ENCODE measurements at regions of chr17 and their contacts with region 1.

Region 1: GRCh38 chr17:7435221-7435675 is at the start of gene TMEM102:
- DNase-seq: peak; percentile 96 to 100 (median 98)
- ATAC-seq: peak; percentile 82
- H3K4me3 ChIP-seq: peak within 1 kb of the TSS; percentile 86
- H3K4me3 Mint-ChIP-seq: peak within 1 kb of the TSS; percentile 87
- H3K27ac ChIP-seq: peak within 1 kb of the TSS; percentile 83 to 93
- H3K27ac Mint-ChIP-seq: peak within 1 kb of the TSS; percentile 87
- H3K4me1 ChIP-seq: peaks cover 51% of the 10 kb centered on the region
- H3K4me1 Mint-ChIP-seq: peaks cover 41% of the 10 kb centered on the region
- H3K27me3 ChIP-seq: peaks cover 16 to 21% of the 10 kb centered on the region in 2 experiments
- H3K27me3 Mint-ChIP-seq: peaks cover 16% of the 10 kb centered on the region
- CTCF ChIP-seq: no peak
- total RNA-seq, gene TMEM102: 6.8 to 7.1 TPM

Region 2: GRCh38 chr17:7204828-7205461 is 230.3 kb before region 1 on chr17:
- CTCF ChIA-PET with region 1: no interaction called
- POLR2A ChIA-PET with region 1: no interaction called
- intact Hi-C with region 1: loop called in 1 of 2 experiments (anchors 1 kb)
- DNase-seq: peak; percentile 84 to 99 (median 94)
- ATAC-seq: peak; percentile 81
- H3K4me3 ChIP-seq: peak overlapping the region; percentile 66
- H3K4me3 Mint-ChIP-seq: peak overlapping the region; percentile 83
- H3K27ac ChIP-seq: peak overlapping the region; percentile 86 to 95
- H3K27ac Mint-ChIP-seq: peak overlapping the region; percentile 87
- H3K4me1 ChIP-seq: peaks cover 31% of the 10 kb centered on the region
- H3K4me1 Mint-ChIP-seq: peaks cover 36% of the 10 kb centered on the region
- H3K27me3 ChIP-seq: no peaks in the 10 kb centered on the region
- H3K27me3 Mint-ChIP-seq: no peaks in the 10 kb centered on the region
- CTCF ChIP-seq: no peak

Region 3: GRCh38 chr17:7329374-7329996 is 105.8 kb before region 1 on chr17:
- CTCF ChIA-PET with region 1: interaction called, 3 read pairs
- POLR2A ChIA-PET with region 1: interaction called, 10 read pairs
- intact Hi-C with region 1: no loop called
- DNase-seq: peak; percentile 90 to 99 (median 94)
- ATAC-seq: peak; percentile 73
- H3K4me3 ChIP-seq: peak overlapping the region; percentile 64
- H3K4me3 Mint-ChIP-seq: peak overlapping the region; percentile 90
- H3K27ac ChIP-seq: peak overlapping the region; percentile 80 to 92
- H3K27ac Mint-ChIP-seq: peak overlapping the region; percentile 88
- H3K4me1 ChIP-seq: peaks cover 58% of the 10 kb centered on the region
- H3K4me1 Mint-ChIP-seq: peaks cover 47% of the 10 kb centered on the region
- H3K27me3 ChIP-seq: no peaks in the 10 kb centered on the region
- H3K27me3 Mint-ChIP-seq: no peaks in the 10 kb centered on the region
- CTCF ChIP-seq: no peak

Region 4: GRCh38 chr17:7394452-7395191 is 40.6 kb before region 1 on chr17 and contains the start of gene PLSCR3:
- CTCF ChIA-PET with region 1: interaction called, 4 read pairs
- POLR2A ChIA-PET with region 1: interaction called, 10 read pairs
- intact Hi-C with region 1: loop called (anchors 5 to 10 kb)
- DNase-seq: peak; percentile 56 to 90 (median 80)
- ATAC-seq: peak; percentile 87
- H3K4me3 ChIP-seq: peak within 1 kb of the TSS; percentile 82
- H3K4me3 Mint-ChIP-seq: peak within 1 kb of the TSS; percentile 96
- H3K27ac ChIP-seq: peak within 1 kb of the TSS; percentile 68 to 79
- H3K27ac Mint-ChIP-seq: peak within 1 kb of the TSS; percentile 94
- H3K4me1 ChIP-seq: peaks cover 48% of the 10 kb centered on the region
- H3K4me1 Mint-ChIP-seq: peaks cover 37% of the 10 kb centered on the region
- H3K27me3 ChIP-seq: no peaks in the 10 kb centered on the region
- H3K27me3 Mint-ChIP-seq: no peaks in the 10 kb centered on the region
- CTCF ChIP-seq: peak; percentile 20
- total RNA-seq, gene PLSCR3: 66.3 to 70.3 TPM

Region 5: DNA sequence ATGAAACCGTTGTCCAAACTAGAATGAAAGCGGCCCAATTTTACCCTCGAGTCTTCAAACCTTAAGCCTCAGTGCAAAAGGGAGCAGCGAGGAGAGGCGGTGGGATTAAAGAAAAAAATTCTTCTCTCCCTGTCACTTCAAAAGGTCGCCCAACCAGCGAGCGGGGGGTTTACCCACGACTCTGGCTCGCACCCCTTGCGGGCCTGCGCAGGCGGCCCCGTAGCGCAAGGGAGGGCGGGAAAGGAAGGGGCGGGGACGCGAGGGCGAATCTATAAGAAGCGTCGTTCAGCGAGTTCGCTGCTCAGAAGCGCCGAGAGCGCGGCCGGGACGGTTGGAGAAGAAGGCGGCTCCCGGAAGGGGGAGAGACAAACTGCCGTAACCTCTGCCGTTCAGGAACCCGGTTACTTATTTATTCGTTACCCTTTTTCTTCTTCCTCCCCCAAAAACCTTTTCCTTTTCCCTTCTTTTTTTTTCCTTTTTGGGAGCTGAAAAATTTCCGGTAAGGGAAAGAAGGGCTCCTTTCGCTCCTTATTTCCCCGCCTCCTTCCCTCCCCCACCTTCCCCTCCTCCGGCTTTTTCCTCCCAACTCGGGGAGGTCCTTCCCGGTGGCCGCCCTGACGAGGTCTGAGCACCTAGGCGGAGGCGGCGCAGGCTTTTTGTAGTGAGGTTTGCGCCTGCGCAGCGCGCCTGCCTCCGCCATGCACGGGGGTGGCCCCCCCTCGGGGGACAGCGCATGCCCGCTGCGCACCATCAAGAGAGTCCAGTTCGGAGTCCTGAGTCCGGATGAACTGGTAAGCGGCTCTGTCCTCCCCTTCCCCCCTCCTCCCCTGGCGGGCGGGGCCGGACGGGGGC is 49.0 kb after region 1 on chr17 and contains the start of gene POLR2A:
- CTCF ChIA-PET with region 1: interaction called, 61 read pairs
- POLR2A ChIA-PET with region 1: interaction called, 156 read pairs
- intact Hi-C with region 1: loop called (anchors 1 kb)
- DNase-seq: peak; percentile 96 to 100 (median 98)
- ATAC-seq: peak; percentile 66
- H3K4me3 ChIP-seq: peak within 1 kb of the TSS; percentile 87
- H3K4me3 Mint-ChIP-seq: peak within 1 kb of the TSS; percentile 94
- H3K27ac ChIP-seq: peak within 1 kb of the TSS; percentile 99
- H3K27ac Mint-ChIP-seq: peak within 1 kb of the TSS; percentile 99
- H3K4me1 ChIP-seq: peaks cover 73% of the 10 kb centered on the region
- H3K4me1 Mint-ChIP-seq: peaks cover 72% of the 10 kb centered on the region
- H3K27me3 ChIP-seq: no peaks in the 10 kb centered on the region
- H3K27me3 Mint-ChIP-seq: no peaks in the 10 kb centered on the region
- CTCF ChIP-seq: no peak
- total RNA-seq, gene POLR2A: 491 to 501 TPM

Region 6: DNA sequence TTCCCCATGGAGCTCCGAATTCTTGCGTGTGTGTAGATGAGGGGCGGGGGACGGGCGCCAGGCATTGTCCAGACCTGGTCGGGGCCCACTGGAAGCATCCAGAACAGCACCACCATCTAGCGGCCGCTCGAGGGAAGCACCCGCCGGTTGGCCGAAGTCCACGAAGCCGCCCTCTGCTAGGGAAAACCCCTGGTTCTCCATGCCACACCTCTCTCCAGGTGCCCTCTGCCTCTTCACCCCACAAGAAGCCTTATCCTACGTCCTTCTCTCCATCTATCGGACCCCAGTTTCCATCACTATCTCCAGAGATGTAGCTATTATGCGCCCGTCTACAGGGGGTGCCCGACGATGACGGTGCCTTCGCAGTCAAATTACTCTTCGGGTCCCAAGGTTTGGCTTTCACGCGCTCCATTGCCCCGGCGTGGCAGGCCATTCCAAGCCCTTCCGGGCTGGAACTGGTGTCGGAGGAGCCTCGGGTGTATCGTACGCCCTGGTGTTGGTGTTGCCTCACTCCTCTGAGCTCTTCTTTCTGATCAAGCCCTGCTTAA is 125.9 kb after region 1 on chr17:
- CTCF ChIA-PET with region 1: interaction called, 48 read pairs
- POLR2A ChIA-PET with region 1: interaction called, 27 read pairs
- intact Hi-C with region 1: loop called (anchors 1 kb)
- DNase-seq: peak; percentile 62 to 89 (median 77)
- ATAC-seq: peak; percentile 62
- H3K4me3 ChIP-seq: peak overlapping the region; percentile 91
- H3K4me3 Mint-ChIP-seq: peak overlapping the region; percentile 95
- H3K27ac ChIP-seq: peak overlapping the region; percentile 88 to 96
- H3K27ac Mint-ChIP-seq: peak overlapping the region; percentile 93
- H3K4me1 ChIP-seq: peaks cover 66% of the 10 kb centered on the region
- H3K4me1 Mint-ChIP-seq: peaks cover 40% of the 10 kb centered on the region
- H3K27me3 ChIP-seq: no peaks in the 10 kb centered on the region
- H3K27me3 Mint-ChIP-seq: no peaks in the 10 kb centered on the region
- CTCF ChIP-seq: peak; percentile 89